ENCODE measurements at regions of chr15 and their contacts with region 1.

Region 1: DNA sequence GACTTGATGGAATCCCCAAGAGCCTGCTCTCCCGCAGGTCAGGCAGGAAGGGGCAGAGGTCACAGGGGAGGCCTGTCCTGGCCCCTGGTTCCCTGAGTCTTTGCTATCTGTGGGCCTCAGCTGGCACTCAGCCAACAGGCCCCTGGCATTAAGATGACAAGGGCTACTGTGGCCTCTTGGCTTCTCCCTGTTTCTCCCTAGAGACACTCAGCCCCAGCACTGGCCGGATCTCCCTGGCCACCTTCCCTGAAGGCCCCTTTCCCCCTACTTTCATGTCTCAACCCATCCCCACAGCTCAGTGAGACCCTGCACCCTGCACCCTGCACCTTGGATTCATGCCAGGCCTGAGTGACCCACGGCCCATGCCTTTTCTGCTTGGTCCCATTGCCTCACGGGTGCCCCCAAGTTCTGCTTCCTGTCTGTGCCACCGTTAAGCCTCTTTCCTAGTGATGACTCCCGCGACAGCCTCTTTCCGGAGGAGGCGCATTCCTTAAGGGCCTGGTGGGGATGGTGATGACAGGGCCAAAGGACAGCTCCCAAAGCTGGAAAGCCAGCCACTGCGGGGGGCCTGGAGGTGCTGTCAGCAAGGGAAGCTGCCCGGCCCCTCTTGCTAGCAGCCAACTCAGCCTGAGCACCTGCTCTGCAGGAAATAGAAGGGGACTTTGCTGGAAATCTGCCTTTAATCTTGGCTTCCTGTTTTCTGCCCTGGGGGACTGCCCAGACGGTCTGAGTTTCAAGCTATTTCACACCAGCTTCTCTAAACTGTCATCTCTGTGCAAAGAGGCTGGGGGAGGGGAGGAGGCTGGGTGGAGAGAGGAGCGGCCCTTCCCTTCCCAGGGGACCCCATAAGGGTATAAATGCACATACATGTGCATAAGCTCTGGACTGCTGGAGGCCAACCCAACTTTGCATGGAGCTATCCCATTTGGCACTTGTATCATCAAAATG is 4.8 kb upstream of the CSK start:
- DNase-seq: no peak
- H3K4me3 ChIP-seq: no peak overlapping the region
- H3K27ac ChIP-seq: no peak overlapping the region
- H3K4me1 ChIP-seq: peaks cover 3 to 9% of the 10 kb centered on the region in 2 donors
- H3K27me3 ChIP-seq: no peaks in the 10 kb centered on the region
- CTCF ChIP-seq: no peak
- POLR2A ChIP-seq: no peak

Region 2: GRCh38 chr15:74695597-74696397 is 81.3 kb before region 1 on chr15 and contains the start of gene EDC3:
- intact Hi-C with region 1: no loop called
- DNase-seq: peak; percentile 79 to 81
- H3K4me3 ChIP-seq: peak within 1 kb of the TSS; percentile 67 to 92
- H3K27ac ChIP-seq: peak within 1 kb of the TSS; percentile 88
- H3K4me1 ChIP-seq: no peaks in the 10 kb centered on the region
- H3K27me3 ChIP-seq: no peaks in the 10 kb centered on the region
- CTCF ChIP-seq: peak in 1 of 4 experiments; percentile 11
- POLR2A ChIP-seq: peak in 1 of 2 donors; percentile 24
- total RNA-seq, gene EDC3: 8.7 to 40.6 (median 17.9) TPM

Region 3: GRCh38 chr15:74950078-74951000 is 173.2 kb after region 1 on chr15:
- intact Hi-C with region 1: loop called (anchors 5 kb)
- DNase-seq: peak; percentile 72 to 83
- H3K4me3 ChIP-seq: no peak overlapping the region
- H3K27ac ChIP-seq: no peak overlapping the region
- H3K4me1 ChIP-seq: no peaks in the 10 kb centered on the region
- H3K27me3 ChIP-seq: no peaks in the 10 kb centered on the region
- CTCF ChIP-seq: peak; percentile 94 to 99 (median 98)
- POLR2A ChIP-seq: no peak

Region 4: GRCh38 chr15:74988007-74988800 is 211.1 kb after region 1 on chr15:
- intact Hi-C with region 1: no loop called
- DNase-seq: no peak
- H3K4me3 ChIP-seq: no peak overlapping the region
- H3K27ac ChIP-seq: no peak overlapping the region
- H3K4me1 ChIP-seq: no peaks in the 10 kb centered on the region
- H3K27me3 ChIP-seq: no peaks in the 10 kb centered on the region
- CTCF ChIP-seq: no peak
- POLR2A ChIP-seq: no peak

Region 5: GRCh38 chr15:75130597-75131268 is 353.6 kb after region 1 on chr15:
- intact Hi-C with region 1: no loop called
- DNase-seq: no peak
- H3K4me3 ChIP-seq: no peak overlapping the region
- H3K27ac ChIP-seq: no peak overlapping the region
- H3K4me1 ChIP-seq: no peaks in the 10 kb centered on the region
- H3K27me3 ChIP-seq: no peaks in the 10 kb centered on the region
- CTCF ChIP-seq: no peak
- POLR2A ChIP-seq: no peak

Region 6: GRCh38 chr15:75201609-75202250 is 424.6 kb after region 1 on chr15 and contains the start of gene C15orf39:
- intact Hi-C with region 1: loop called (anchors 10 kb)
- DNase-seq: peak; percentile 64 to 79
- H3K4me3 ChIP-seq: peak within 1 kb of the TSS; percentile 63 to 79
- H3K27ac ChIP-seq: peak within 1 kb of the TSS; percentile 86 to 93
- H3K4me1 ChIP-seq: peaks cover 9 to 12% of the 10 kb centered on the region in 2 donors
- H3K27me3 ChIP-seq: no peaks in the 10 kb centered on the region
- CTCF ChIP-seq: peak; percentile 69 to 97 (median 95)
- POLR2A ChIP-seq: peak; percentile 97 to 99
- total RNA-seq, gene C15orf39: 4.6 to 43.9 (median 14.1) TPM

Measured in uterus (tissue), 4 donors.